ENCODE measurements at regions of chr15 and their contacts with region 1.

Region 1: DNA sequence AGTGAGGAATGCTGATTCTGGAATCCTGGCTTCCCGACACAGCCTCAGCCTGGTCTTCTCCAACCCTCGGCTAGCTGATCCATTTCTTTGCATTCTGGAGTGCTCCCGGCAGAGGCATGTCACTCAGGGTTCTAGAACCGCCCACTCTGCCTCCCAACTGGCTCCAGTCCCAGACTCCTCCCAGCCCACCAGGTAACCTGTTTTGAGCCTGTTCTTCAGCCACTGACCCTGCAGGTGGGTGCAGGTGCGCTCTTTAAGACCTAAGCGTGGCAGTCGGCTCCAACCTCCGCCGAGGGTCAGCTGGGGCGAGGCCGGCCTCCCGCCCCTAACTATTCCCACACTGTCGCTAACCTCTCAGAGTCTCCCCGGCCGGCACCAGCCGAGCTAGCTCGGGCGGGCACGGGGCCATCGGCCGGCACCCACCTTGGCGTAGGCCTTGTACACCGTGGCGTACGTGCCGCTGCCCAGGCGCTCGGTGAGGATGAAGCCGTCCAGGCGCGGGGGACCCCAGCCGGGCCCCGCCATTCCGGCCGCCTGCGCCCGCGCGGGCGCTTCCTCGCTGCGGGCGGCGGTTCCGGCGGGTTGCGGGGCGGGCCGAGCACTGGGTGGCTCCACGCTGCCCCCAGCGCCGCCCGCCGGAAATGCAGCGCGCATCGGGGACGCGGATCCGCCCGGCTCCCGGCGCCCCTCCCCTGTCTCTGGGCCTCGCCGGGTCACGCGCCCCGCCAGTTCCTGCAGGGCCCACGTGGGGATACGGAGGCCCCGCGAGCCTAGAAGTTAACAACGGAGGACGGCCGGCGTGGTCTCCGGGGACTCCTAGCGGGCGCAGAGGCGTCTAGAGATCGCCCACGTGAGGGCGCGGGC is at the start of gene ULK3:
- DNase-seq: peak; percentile 92 to 96 (median 93)
- H3K4me3 ChIP-seq: peak within 1 kb of the TSS; percentile 29 to 80 (median 46)
- H3K27ac ChIP-seq: peak within 1 kb of the TSS; percentile 81 to 96 (median 87)
- H3K4me1 ChIP-seq: peaks cover 21 to 32% of the 10 kb centered on the region in 2 donors
- H3K27me3 ChIP-seq: no peaks in the 10 kb centered on the region
- CTCF ChIP-seq: peak; percentile 15 to 94 (median 69)
- POLR2A ChIP-seq: peak; percentile 45 to 57
- total RNA-seq, gene ULK3: 30.1 to 83.6 (median 48.9) TPM

Region 2: GRCh38 chr15:74889883-74890664 is 47.3 kb after region 1 on chr15 and contains the start of gene MPI:
- intact Hi-C with region 1: loop called in 1 of 2 experiments (anchors 10 kb)
- DNase-seq: peak; percentile 85 to 91 (median 88)
- H3K4me3 ChIP-seq: peak within 1 kb of the TSS; percentile 13 to 96 (median 81)
- H3K27ac ChIP-seq: peak within 1 kb of the TSS; percentile 0 to 92 (median 84)
- H3K4me1 ChIP-seq: peaks cover 29 to 34% of the 10 kb centered on the region in 2 donors
- H3K27me3 ChIP-seq: no peaks in the 10 kb centered on the region
- CTCF ChIP-seq: peak in 5 of 6 experiments; percentile 24 to 41 (median 27)
- POLR2A ChIP-seq: peak in 1 of 2 donors; percentile 47
- total RNA-seq, gene MPI: 68.7 to 218 (median 105) TPM

Region 3: DNA sequence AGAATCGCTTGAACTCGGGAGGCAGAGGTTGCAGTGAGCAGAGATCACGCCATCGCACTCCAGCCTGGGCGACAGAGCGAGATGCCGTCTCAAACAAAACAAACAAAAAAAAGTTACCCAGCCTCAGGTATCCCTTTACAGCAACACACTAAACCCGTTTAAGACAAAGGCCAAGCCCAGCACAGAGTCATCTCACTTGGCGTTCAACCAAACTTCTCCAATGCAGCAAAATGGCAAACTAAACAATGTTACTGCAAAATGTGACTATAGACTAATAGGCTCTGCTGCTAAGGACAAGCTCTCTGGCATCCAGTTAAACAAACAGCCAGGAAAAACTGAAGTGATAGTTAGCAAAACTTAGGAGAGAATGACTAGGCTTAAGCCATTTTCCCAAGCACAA is 70.2 kb after region 1 on chr15:
- intact Hi-C with region 1: no loop called
- DNase-seq: no peak
- H3K4me3 ChIP-seq: no peak overlapping the region
- H3K27ac ChIP-seq: no peak overlapping the region
- H3K4me1 ChIP-seq: no peaks in the 10 kb centered on the region
- H3K27me3 ChIP-seq: no peaks in the 10 kb centered on the region
- CTCF ChIP-seq: no peak
- POLR2A ChIP-seq: no peak